ENCODE measurements at regions of chr14 and their contacts with region 1.

Region 1: DNA sequence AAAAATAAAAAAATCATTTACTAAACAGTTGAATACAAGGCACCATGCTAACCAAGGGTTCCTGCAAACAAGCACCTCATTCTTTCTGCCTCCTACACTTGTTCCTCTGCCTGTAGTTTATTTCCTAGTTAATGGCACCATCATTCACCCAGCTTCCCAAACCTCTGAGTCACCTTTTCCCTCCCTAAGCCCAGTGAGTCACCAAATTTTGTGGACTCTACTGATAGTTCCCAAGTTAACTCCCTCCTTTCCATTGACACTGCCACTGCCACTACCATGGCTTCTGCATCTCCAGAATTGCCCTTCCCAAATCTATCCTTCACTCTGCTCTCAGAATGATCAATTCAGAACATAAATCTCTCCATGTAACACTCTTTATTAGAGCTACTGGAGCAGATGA is 2.0 kb upstream of the GARIN2 start:
- DNase-seq: peak; percentile 97
- ATAC-seq: peak; percentile 85
- H3K4me3 ChIP-seq: peak overlapping the region; percentile 52
- H3K27ac ChIP-seq: peak overlapping the region; percentile 87
- H3K4me1 ChIP-seq: peaks cover 35% of the 10 kb centered on the region
- H3K27me3 ChIP-seq: no peaks in the 10 kb centered on the region
- CTCF ChIP-seq: no peak

Region 2: GRCh38 chr14:66216763-66217162 is 970.4 kb before region 1 on chr14:
- CTCF ChIA-PET with region 1: no interaction called
- POLR2A ChIA-PET with region 1: no interaction called
- intact Hi-C with region 1: no loop called
- DNase-seq: peak; percentile 15
- ATAC-seq: no peak
- H3K4me3 ChIP-seq: no peak overlapping the region
- H3K27ac ChIP-seq: no peak overlapping the region
- H3K4me1 ChIP-seq: no peaks in the 10 kb centered on the region
- H3K27me3 ChIP-seq: no peaks in the 10 kb centered on the region
- CTCF ChIP-seq: no peak

Region 3: GRCh38 chr14:67221248-67221981 is 34.2 kb after region 1 on chr14:
- CTCF ChIA-PET with region 1: interaction called, 4 read pairs
- POLR2A ChIA-PET with region 1: interaction called, 3 read pairs
- intact Hi-C with region 1: loop called (anchors 1 kb)
- DNase-seq: peak; percentile 93
- ATAC-seq: peak; percentile 97
- H3K4me3 ChIP-seq: peak overlapping the region; percentile 29; the same call in 1 of the 2 replicates
- H3K27ac ChIP-seq: peak overlapping the region; percentile 29
- H3K4me1 ChIP-seq: peaks cover 23% of the 10 kb centered on the region
- H3K27me3 ChIP-seq: no peaks in the 10 kb centered on the region
- CTCF ChIP-seq: no peak

Region 4: GRCh38 chr14:67285876-67286452 is 98.8 kb after region 1 on chr14:
- CTCF ChIA-PET with region 1: interaction called, 11 read pairs
- POLR2A ChIA-PET with region 1: no interaction called
- intact Hi-C with region 1: no loop called
- DNase-seq: peak; percentile 86
- ATAC-seq: peak; percentile 52
- H3K4me3 ChIP-seq: no peak overlapping the region
- H3K27ac ChIP-seq: no peak overlapping the region
- H3K4me1 ChIP-seq: no peaks in the 10 kb centered on the region
- H3K27me3 ChIP-seq: no peaks in the 10 kb centered on the region
- CTCF ChIP-seq: peak; percentile 81

Region 5: GRCh38 chr14:67674481-67675169 is 487.4 kb after region 1 on chr14 and contains the start of gene VTI1B:
- CTCF ChIA-PET with region 1: no interaction called
- POLR2A ChIA-PET with region 1: interaction called, 10 read pairs
- intact Hi-C with region 1: no loop called
- DNase-seq: peak; percentile 83
- ATAC-seq: peak; percentile 81
- H3K4me3 ChIP-seq: peak within 1 kb of the TSS; percentile 84
- H3K27ac ChIP-seq: peak within 1 kb of the TSS; percentile 80
- H3K4me1 ChIP-seq: peaks cover 19% of the 10 kb centered on the region
- H3K27me3 ChIP-seq: no peaks in the 10 kb centered on the region
- CTCF ChIP-seq: peak; percentile 30; the same call in 1 of the 2 replicates
- total RNA-seq, gene VTI1B: 72.6 and 93.8 TPM in 2 replicates